ENCODE measurements at regions of chr21 and their contacts with region 1.

Region 1: DNA sequence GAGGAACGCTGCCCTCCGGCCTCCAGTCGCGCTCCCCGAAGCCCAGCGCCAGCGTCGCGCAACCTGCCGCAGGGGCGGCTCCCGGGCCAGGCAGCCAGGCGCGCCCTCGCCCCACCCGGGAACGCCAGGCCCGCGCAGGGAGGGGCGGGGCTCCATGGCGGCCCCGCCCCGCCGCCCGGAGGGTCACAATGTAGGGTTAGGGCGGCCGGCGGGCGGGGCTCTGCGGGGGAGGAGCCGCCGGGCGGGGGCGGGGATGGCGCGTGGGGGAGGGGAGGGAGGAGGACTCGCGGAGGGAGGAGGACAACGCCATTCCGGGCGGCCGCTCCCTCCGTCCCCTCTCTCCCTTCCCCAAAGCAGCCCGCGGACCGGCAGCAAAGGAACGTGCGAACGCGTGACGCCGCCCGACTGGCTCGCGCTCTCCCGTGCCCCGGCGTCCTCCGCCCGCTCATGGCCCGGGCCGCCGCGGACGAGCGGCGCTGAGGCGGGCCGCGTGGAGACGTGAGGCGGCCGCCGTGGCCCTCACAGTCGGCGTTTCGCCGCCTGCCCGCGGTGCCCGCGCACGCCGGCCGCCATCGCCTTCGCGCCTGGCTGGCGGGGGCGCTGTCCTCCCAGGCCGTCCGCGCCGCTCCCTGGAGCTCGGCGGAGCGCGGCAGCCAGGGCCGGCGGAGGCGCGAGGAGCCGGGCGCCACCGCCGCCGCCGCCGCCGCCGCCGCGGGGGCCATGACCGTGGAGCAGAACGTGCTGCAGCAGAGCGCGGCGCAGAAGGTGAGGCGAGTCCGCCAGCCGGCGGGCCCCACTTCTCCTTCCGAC is at the start of gene USP25:
- DNase-seq: peak; percentile 74 to 95
- H3K4me3 ChIP-seq: peak within 1 kb of the TSS; percentile 89 to 100
- H3K27ac ChIP-seq: peak within 1 kb of the TSS; percentile 92 to 95
- H3K4me1 ChIP-seq: peaks cover 0 to 8% of the 10 kb centered on the region in 2 donors
- H3K27me3 ChIP-seq: no peaks in the 10 kb centered on the region
- CTCF ChIP-seq: peak in 1 of 3 experiments; percentile 38
- total RNA-seq, gene USP25: 29.2 TPM

Region 2: DNA sequence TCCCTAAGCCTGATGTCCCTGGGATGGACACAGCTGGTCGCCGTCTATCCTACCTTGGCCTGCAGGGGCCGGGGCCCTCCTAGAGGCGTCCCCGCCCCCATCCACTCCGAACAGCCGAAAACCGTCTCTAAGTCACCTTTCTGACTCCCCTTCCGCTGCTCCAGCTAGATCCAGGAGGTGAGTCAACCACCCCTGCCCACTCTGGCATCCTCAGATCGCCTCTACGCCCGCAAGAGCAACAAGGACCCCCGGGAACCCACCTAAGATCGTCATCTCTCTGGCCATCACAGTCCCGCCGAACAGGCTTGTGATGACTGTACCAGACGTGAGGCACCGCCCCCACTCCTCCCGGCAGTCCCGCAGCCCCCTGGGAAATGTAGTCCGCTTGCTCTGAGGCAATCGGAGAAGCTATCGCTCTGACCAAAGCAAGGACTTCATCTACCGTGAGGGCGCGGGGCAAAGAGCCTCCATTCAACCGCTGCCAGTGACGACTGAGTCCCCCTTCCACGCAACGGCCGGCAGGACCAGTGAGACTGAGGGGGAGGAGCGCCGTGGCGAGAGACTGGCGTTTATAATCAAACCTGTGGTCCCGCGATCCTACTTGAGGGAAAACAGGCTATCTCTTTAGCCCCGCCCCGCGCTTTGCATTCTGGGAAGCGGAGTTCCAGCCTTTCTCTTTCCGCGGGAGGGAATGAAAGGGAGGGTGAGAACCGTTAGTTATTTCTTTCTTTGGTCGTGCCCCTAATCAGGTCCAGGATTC is 1346.9 kb before region 1 on chr21 and contains the start of gene HSPA13:
- intact Hi-C with region 1: loop called (anchors 2 kb)
- DNase-seq: peak; percentile 100
- H3K4me3 ChIP-seq: peak within 1 kb of the TSS; percentile 83 to 92
- H3K27ac ChIP-seq: peak within 1 kb of the TSS; percentile 87 to 95
- H3K4me1 ChIP-seq: peaks cover 0 to 9% of the 10 kb centered on the region in 2 donors
- H3K27me3 ChIP-seq: no peaks in the 10 kb centered on the region
- CTCF ChIP-seq: no peak
- total RNA-seq, gene HSPA13: 14.8 TPM

Region 3: DNA sequence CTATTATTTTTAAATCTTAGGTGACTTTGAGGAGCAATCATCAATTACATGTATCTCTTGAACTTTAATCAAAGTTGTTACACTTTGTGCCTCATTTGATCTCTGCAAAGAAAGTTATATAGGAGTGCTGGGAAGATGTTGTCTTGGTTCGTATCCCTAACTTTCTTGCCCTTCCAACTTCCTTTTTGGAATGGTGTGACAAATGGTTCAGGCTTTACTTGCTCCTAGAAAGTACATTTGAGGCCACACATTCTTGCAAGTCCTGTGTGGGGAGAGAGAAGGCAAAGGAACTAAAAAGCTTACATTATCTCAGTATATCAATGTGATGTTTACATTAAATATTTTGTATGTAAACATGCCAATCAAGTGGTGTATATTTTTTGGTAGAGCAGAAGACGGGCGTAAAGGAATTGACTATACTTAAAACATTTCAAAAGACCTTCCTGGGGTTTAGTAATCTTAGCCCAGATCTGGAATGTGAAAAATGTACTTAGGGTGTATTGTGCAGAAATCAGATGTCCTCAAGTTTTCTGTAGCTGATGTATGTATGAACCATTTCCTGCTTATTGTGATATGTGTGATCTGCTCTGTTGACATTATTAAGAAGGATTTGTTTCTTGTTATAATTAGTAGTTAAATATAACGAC is 59.1 kb after region 1 on chr21:
- intact Hi-C with region 1: loop called (anchors 10 kb)
- DNase-seq: no peak
- H3K4me3 ChIP-seq: no peak overlapping the region
- H3K27ac ChIP-seq: no peak overlapping the region
- H3K4me1 ChIP-seq: no peaks in the 10 kb centered on the region
- H3K27me3 ChIP-seq: no peaks in the 10 kb centered on the region
- CTCF ChIP-seq: no peak

Region 4: DNA sequence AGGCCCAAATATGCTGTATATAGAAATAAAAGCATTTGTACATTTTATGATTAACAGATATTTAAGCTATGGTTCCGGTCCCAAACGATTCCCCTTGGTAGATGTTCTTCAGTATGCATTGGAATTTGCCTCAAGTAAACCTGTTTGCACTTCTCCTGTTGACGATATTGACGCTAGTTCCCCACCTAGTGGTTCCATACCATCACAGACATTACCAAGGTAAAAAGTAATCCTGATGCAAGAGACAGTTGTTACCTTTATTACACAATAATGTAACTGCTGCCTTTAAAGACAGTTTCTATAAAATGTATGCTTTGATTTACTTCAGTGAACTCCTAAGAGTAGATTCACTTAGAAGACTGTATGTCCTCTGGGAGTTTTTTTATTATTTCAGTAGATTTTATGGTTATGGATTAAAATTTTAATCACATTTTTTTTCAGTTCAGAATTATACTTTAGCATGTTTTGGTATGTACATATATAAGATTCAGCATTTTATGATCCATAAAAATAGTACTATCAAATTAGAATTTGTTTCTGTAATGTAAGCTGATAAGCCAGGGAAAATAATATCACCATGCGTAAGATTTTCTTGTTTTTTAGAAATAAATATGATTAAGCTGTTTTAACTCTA is 96.4 kb after region 1 on chr21:
- intact Hi-C with region 1: loop called (anchors 5 kb)
- DNase-seq: no peak
- H3K4me3 ChIP-seq: no peak overlapping the region
- H3K27ac ChIP-seq: no peak overlapping the region
- H3K4me1 ChIP-seq: no peaks in the 10 kb centered on the region
- H3K27me3 ChIP-seq: no peaks in the 10 kb centered on the region
- CTCF ChIP-seq: peak in 1 of 3 experiments; percentile 35

Region 5: DNA sequence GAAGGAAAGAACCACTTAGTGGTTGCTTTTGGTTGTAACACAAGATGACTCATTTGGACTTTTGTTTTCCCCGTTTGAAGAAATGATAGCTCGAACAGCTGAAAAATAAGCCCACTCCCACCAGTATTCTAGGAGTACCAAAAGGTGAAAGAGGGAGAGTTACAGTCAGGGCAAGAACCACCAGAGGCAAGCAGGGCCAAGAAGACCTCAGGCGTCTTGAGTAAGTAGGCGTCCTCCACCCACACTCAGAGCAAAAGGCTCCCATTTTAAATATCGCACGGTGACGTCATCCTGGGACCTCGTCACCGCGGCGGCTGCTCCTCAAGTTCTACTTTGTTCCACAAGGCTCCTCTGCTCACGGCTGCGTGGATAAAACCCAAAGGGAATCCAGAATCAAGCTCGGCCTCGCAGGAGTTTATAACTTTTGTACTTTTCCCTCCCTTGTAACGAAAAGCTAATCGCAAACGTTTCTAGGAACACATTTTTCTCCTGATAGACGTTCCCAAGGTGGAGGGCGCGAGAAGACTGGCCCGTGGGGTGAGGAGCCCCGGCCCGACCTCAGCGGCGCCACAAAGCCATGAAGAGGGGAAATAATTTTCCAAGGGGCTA is 1881.6 kb after region 1 on chr21:
- intact Hi-C with region 1: loop called (anchors 5 kb)
- DNase-seq: peak; percentile 57 to 95
- H3K4me3 ChIP-seq: peak overlapping the region; percentile 82 to 93
- H3K27ac ChIP-seq: peak overlapping the region; percentile 89 to 96
- H3K4me1 ChIP-seq: peaks cover 0 to 7% of the 10 kb centered on the region in 2 donors
- H3K27me3 ChIP-seq: no peaks in the 10 kb centered on the region
- CTCF ChIP-seq: no peak